ENCODE measurements at regions of chr3 and their contacts with region 1.

Region 1: GRCh38 chr3:114290911-114291901 is 2.6 kb upstream of the TIGIT start:
- DNase-seq: peak; percentile 89
- ATAC-seq: peak; percentile 87
- H3K4me3 Mint-ChIP-seq: peak overlapping the region; percentile 75
- H3K27ac Mint-ChIP-seq: peak overlapping the region; percentile 90
- H3K4me1 Mint-ChIP-seq: peaks cover 20% of the 10 kb centered on the region
- H3K27me3 Mint-ChIP-seq: no peaks in the 10 kb centered on the region

Region 2: DNA sequence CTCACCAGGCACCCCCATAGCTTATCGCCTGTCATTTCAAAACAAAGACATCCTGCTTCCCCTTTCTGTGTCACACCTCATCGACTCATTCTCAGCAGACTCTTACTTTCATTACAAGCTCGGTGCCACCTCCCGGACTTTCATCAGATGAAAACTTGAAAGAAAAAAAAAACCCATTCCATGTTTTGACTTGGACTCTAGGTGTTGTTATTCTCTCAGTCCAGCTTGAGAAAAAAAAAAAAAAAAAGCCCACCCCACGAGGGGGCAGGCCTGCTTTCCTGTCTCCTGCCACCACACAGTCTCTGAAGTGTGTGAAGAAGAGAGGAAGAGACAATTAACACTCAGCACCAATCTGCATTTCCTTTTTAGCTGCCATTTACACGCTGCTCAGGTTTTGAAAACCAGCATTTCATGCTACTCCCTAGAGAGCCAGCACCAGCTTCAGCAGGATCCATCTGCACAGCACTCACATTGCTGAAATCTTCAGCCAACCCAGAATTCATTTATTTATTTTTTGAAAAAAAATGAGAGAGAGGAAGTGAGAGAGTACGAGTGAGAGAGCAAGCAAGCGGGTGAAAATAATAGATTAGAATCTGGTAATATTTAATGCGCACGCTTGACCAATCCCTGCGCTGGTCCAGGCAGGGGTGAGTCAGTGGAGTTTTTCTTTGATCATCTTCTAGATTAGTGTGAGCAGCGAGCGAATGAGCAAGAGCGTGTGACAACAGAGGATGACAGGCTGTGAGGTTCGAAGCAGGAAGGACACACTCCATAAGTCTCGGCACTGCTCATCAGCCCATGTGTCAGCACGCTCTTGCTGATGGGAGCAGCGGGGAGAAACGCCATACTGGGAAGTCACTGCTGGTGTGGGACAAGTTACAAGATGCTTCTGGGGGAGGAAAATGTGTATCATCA is 77.3 kb before region 1 on chr3:
- POLR2A ChIA-PET with region 1: interaction called, 15 read pairs
- DNase-seq: peak; percentile 68
- ATAC-seq: peak; percentile 62
- H3K4me3 Mint-ChIP-seq: no peak overlapping the region
- H3K27ac Mint-ChIP-seq: no peak overlapping the region
- H3K4me1 Mint-ChIP-seq: peaks cover 29% of the 10 kb centered on the region
- H3K27me3 Mint-ChIP-seq: no peaks in the 10 kb centered on the region

Region 3: DNA sequence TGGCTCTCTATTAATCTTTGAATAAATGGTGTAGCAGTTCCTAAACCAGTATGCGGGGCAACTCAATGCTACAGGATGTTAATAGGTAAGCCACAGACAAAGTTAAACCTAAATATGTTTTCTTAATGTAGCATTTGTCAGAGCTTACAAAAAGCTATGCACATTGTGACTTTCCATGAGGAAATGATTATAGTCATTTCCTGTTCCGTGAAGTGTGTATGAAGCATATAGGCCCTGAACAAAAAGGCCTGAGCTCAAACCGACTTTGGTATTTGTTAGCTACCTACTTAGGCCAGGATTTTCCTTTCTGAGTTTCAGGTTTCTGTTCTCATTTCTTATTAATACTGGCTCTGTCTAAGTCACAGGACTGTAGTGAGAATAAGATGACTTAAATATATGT is 68.1 kb before region 1 on chr3:
- POLR2A ChIA-PET with region 1: interaction called, 10 read pairs
- DNase-seq: no peak
- ATAC-seq: peak; percentile 69
- H3K4me3 Mint-ChIP-seq: peak overlapping the region; percentile 59
- H3K27ac Mint-ChIP-seq: peak overlapping the region; percentile 99
- H3K4me1 Mint-ChIP-seq: peaks cover 67% of the 10 kb centered on the region
- H3K27me3 Mint-ChIP-seq: no peaks in the 10 kb centered on the region

Measured in activated naive CD8-positive, alpha-beta T cell treated with anti-CD3 and anti-CD28 coated beads, Interleukin-2, amount 10 ng/mL, durations not matched to agents 7 days and 5 days (primary cell).